Mucosa of descending colon (tissue), 3 donors: ENCODE measurements at regions of chr1 and their contacts with region 1.

Region 1: DNA sequence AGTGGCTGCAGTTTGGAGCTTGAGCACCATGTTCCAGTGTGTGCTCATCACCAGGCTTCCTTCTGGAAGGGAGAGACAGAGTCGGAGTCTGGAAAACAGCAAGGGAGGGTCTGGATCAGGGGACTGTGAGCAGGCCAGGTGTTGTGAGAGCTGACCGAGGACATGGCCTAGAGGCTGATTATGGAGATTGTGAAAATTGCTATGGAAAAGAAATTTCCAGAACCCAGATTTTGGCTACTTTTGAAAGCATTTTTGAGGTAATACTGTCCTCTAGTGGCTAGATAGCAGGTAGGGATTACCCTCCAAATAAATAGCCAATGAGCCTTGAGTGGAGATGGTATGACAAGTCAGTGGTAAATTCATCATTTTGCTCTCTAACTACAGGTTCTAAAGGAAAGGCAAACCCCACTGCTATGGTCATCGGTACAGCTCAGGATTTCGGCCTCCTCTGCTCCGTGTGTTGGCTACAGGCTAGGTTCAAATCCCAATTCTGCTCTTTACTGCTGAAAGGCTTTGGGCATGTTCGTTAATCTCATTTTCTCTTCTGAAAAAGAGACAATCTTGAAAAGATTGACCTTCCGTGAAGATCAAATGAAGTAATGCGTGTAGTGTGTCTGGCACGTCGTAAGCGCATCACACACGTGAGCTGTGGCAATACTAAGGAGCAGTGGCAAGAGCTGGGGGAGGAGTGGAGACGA is 1.0 kb upstream of the HAO2 start:
- DNase-seq: no peak
- ATAC-seq: peak; percentile 54
- H3K4me3 ChIP-seq: no peak overlapping the region
- H3K4me1 ChIP-seq: no peaks in the 10 kb centered on the region
- CTCF ChIP-seq: peak; percentile 49

Region 2: DNA sequence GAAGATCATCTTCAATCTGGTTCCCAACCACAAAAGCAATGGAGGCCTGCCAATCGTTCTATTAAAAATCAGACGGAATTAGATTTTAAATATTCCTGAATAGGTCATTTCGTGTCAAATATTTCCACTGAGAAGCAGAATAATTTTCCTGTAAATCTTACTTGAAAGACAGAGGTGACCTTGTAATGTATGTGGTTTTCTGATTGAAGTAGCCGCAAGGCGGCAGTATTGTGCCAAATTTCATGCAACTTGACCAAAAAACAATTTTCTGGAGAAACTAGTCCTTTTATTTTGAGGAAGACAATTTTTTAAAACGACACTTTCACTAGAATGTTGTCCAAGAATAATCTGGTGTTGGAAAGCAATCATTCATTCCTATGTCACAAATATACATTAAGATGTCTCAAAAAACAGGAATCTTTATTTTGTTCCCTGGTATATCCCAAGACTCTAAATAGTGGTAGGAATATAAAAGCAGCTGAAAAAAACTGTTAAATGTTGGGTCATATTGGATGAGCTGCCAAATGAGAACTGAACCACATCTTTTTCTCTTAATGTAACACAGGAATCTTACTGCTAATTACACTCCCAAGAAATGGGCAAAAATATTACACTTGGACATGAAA is 1216.2 kb before region 1 on chr1:
- intact Hi-C with region 1: loop called in 1 of 2 experiments (anchors 10 kb)
- DNase-seq: peak in 2 of 3 donors; percentile 23 to 76
- ATAC-seq: no peak
- H3K4me3 ChIP-seq: no peak overlapping the region
- H3K4me1 ChIP-seq: no peaks in the 10 kb centered on the region
- CTCF ChIP-seq: no peak

Region 3: DNA sequence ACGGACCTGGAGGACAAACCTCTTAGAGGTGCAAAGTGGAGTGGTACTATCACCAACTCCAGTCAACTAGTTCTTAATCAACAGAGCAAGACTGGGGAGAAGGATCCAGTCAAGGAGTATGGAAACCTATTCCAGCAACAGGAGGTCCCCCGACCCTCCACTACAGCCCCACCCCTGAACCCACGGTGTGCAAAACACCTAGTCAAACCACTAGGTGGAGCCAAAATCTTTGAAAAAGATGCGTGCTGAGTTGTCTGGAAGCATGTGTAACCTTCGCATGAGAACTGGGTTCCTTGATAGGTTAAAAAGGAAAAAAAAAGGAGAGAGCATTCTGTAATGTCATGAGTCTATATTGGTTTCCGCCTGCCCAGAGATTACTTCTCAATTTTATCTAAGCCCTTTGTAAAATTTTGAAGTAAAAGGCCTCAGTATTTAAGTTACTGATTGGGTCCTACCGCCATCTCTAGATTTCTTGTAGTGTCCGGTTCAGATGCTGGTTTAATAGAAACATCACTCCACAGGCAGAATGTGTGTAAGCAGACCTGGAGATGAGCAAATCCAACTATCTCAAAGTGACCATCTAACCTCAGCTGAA is 80.9 kb before region 1 on chr1:
- intact Hi-C with region 1: loop called (anchors 5 to 10 kb)
- DNase-seq: peak in 1 of 3 donors; percentile 33
- ATAC-seq: peak; percentile 61
- H3K4me3 ChIP-seq: no peak overlapping the region
- H3K4me1 ChIP-seq: no peaks in the 10 kb centered on the region
- CTCF ChIP-seq: no peak

Region 4: DNA sequence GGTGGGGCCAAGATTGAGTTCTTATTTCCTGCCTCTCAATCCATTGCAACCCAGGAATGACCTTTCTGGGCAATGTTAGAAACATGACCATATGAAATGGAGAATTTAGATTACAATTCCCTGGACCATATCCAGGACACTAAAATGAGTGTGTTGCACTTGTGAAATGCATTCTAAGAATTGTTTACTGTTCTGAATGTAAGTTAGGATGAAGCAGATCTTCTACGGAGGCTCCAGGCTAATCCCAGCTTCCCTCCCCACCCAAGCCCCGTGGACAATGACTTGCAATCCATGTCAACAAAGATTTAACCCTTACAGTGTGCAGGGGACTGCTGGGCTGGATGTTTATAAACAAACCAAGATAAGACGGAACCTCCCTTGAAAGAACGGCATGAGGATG is 30.7 kb before region 1 on chr1:
- intact Hi-C with region 1: no loop called
- DNase-seq: no peak
- ATAC-seq: no peak
- H3K4me3 ChIP-seq: no peak overlapping the region
- H3K4me1 ChIP-seq: no peaks in the 10 kb centered on the region
- CTCF ChIP-seq: no peak

Region 5: DNA sequence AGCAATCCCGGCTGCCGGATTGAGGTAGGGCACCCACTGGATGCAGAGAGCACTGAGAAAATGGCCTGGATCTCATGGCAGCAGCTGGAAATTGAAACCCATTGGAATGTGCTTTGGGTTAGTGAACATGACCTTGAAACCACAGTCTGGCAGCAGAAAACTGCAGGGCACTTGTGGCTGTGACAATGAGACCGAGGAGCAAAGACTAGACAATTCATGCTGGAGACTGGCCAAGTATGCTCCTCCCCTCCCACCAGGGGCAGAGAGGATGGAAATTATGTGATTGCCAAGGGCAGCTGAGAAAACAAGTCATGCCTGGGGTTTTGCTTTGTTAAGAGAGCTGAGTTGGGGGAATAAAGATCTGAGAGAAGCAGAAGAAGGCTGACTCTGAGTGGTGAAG is 219.8 kb after region 1 on chr1:
- intact Hi-C with region 1: no loop called
- DNase-seq: no peak
- ATAC-seq: no peak
- H3K4me3 ChIP-seq: no peak overlapping the region
- H3K4me1 ChIP-seq: no peaks in the 10 kb centered on the region
- CTCF ChIP-seq: no peak